PC-9 (cell line): ENCODE measurements at regions of chr6 and their contacts with region 1.

Region 1: GRCh38 chr6:31718267-31718666 is 3.1 kb downstream of the LY6G6D start:
- DNase-seq: peak; percentile 77 to 91
- H3K4me3 ChIP-seq: no peak overlapping the region
- H3K27ac ChIP-seq: no peak overlapping the region; the same call in 1 of the 2 replicates
- H3K4me1 ChIP-seq: peaks cover 42% of the 10 kb centered on the region
- H3K27me3 ChIP-seq: no peaks in the 10 kb centered on the region
- CTCF ChIP-seq: no peak

Region 2: DNA sequence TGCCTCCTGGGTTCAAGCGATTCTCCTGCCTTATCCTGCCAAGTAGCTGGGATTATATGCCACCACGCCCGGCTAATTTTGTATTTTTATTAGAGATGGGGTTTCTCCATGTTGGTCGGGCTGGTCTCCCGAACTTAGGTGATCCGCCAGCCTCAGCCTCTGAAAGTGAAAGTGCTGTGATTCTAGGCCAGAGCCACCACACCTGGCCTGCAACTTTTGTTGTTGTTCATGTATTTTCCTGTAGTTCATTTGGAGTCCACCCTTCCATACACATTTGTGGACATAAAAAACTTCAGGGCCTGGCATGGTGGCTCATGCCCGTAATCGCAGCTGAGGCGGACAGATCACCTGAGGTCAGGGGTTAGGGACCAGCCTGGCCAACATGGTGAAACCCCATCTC is 123.8 kb after region 1 on chr6:
- CTCF ChIA-PET with region 1: no interaction called
- POLR2A ChIA-PET with region 1: interaction called, 11 read pairs
- intact Hi-C with region 1: no loop called
- DNase-seq: no peak
- H3K4me3 ChIP-seq: no peak overlapping the region
- H3K27ac ChIP-seq: no peak overlapping the region
- H3K4me1 ChIP-seq: peaks cover 14% of the 10 kb centered on the region
- H3K27me3 ChIP-seq: no peaks in the 10 kb centered on the region
- CTCF ChIP-seq: no peak